Activated CD4-positive, alpha-beta T cell treated with anti-CD3 and anti-CD28 coated beads for 36 hours (primary cell): ENCODE measurements at regions of chr15 and their contacts with region 1.

Region 1: GRCh38 chr15:99424978-99425656 is 140.7 kb upstream of the MEF2A start:
- DNase-seq: peak; percentile 79
- ATAC-seq: peak; percentile 99
- H3K4me3 Mint-ChIP-seq: peak overlapping the region; percentile 35
- H3K27ac Mint-ChIP-seq: peak overlapping the region; percentile 90
- H3K4me1 Mint-ChIP-seq: peaks cover 62% of the 10 kb centered on the region
- H3K27me3 Mint-ChIP-seq: peaks cover 2% of the 10 kb centered on the region

Region 2: DNA sequence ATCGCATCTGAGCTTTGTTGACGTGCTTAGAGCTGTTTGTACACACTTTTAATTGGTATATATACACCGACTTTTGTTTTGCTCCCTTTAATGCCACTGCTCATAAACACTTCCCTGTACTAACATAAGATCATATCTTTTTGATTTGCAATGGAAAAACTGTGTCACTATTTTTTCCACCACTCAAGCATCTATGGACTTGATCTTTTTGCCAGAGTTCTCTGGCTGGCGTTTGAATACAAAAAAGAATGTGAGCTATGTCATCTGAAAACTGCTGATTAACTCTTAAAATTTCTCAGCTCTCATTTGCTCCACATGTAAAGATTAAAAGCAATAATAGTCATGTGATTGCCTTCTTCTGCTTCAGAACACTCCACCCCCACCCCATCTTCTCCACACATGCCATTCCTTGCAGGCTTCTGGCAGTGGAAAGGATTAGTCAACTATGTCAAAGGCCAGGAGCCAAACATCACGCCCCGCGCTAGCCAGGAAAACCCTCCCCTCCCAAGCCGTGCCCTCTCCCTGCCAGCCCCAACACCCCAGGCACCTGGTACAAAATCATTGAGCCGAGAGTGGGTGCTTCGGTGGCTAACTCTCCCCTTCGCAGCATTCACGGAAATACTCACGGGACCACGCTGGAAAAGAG is 17.3 kb after region 1 on chr15:
- CTCF ChIA-PET with region 1: no interaction called
- POLR2A ChIA-PET with region 1: no interaction called
- intact Hi-C with region 1: loop called in 1 of 2 experiments (anchors 2 kb)
- DNase-seq: peak; percentile 23
- ATAC-seq: peak; percentile 64
- H3K4me3 Mint-ChIP-seq: no peak overlapping the region
- H3K27ac Mint-ChIP-seq: peak overlapping the region; percentile 3
- H3K4me1 Mint-ChIP-seq: peaks cover 57% of the 10 kb centered on the region
- H3K27me3 Mint-ChIP-seq: no peaks in the 10 kb centered on the region